IMR-90 (cell line): ENCODE measurements at regions of chr1 and their contacts with region 1.

Region 1: DNA sequence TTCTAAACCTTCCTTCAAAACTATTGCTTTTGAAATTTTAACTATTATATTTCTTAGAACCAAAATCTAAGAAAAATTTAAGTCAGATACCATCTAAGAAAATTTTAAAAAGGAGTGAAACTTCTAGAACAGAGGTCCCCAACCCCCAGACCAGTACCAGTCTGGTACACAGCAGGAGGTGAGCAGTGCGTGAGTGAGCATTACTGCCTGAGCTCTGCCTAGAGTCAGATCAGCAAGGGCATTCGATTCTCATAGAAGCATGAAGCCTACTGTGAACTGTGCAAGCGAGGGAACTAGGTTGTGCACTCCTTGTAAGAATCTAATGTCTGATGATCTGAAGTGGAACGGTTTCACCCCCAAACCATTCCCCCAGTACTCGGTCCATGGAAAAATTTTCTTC is 106.7 kb downstream of the VAV3 start:
- DNase-seq: no peak
- ATAC-seq: no peak
- H3K4me3 ChIP-seq: no peak overlapping the region
- H3K27ac ChIP-seq: no peak overlapping the region
- H3K4me1 ChIP-seq: no peaks in the 10 kb centered on the region
- H3K27me3 ChIP-seq: no peaks in the 10 kb centered on the region
- CTCF ChIP-seq: no peak
- POLR2A ChIP-seq: no peak
- RAD21 ChIP-seq: no peak

Region 2: DNA sequence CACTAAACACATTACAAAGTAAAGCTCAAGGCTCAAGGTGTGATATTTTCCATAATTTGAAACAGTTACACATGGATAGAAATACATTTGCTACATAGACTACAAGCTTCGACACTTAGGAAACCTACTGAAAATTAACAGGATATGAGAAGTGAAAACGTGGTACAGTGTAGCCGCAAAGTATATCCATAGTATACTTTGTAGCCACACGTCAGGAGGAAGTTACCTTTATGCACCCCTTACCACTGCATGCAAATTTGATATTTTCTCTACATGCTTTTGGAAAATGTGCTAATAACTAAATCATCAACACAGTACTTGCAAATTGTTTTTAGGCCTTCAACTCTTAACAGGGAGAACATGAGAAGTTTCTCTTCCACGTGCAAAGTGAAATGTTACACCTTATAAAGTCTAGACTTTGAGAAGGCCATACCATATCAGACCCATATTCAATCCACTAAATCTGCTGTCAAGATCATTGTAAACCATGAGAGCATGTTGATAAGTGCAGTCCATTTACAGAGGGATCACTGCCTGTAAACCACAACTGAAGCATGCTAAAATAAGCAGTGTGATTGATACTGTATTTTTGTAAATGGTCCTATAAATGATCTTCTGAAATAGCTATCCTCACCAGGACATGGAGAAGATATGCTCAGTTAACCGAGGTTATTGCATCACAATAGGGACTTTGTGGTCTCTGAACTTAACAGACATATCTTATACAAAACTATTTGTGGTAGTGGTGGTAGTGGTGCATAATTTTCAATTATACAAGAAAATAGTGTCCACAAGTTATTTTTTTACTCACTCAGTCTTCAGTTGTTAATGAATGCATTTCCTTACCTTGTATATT is 42.0 kb after region 1 on chr1:
- CTCF ChIA-PET with region 1: no interaction called
- POLR2A ChIA-PET with region 1: no interaction called
- dilution Hi-C with region 1: no loop called
- in situ Hi-C with region 1: no loop called
- intact Hi-C with region 1: loop called (anchors 5 kb)
- DNase-seq: no peak
- ATAC-seq: no peak
- H3K4me3 ChIP-seq: no peak overlapping the region
- H3K27ac ChIP-seq: no peak overlapping the region
- H3K4me1 ChIP-seq: no peaks in the 10 kb centered on the region
- H3K27me3 ChIP-seq: no peaks in the 10 kb centered on the region
- CTCF ChIP-seq: no peak
- POLR2A ChIP-seq: no peak
- RAD21 ChIP-seq: no peak